ENCODE measurements at regions of chr18 and their contacts with region 1.

Region 1: GRCh38 chr18:59249205-59249774 is 24.0 kb downstream of the RAX start:
- DNase-seq: peak in 4 of 5 donors; percentile 69 to 93 (median 84)
- H3K4me3 ChIP-seq: no peak overlapping the region
- H3K27ac ChIP-seq: no peak overlapping the region
- H3K4me1 ChIP-seq: no peaks in the 10 kb centered on the region
- H3K27me3 ChIP-seq: peaks cover 9% of the 10 kb centered on the region
- CTCF ChIP-seq: peak; percentile 59

Region 2: DNA sequence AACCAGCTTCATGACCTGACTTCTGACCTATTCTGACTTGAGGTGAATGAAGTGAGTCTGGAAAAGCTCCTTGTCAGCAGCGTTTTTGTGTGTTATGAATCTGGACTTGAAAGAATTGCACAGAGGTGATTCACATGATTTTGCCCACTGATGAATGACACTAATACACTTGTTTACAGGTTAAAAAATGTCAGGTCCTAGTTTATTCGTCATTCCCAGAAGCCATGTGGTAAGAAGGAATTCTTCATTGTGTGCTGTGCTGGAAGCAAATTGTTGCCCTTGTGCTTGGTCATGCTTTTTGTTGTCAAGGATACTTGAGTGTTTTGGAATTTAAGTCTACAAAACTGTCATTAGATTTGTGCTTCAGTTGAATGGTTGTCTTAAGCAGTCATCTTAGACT is 94.1 kb before region 1 on chr18:
- intact Hi-C with region 1: no loop called
- DNase-seq: no peak
- H3K4me3 ChIP-seq: no peak overlapping the region
- H3K27ac ChIP-seq: no peak overlapping the region
- H3K4me1 ChIP-seq: no peaks in the 10 kb centered on the region
- H3K27me3 ChIP-seq: no peaks in the 10 kb centered on the region
- CTCF ChIP-seq: no peak

Region 3: DNA sequence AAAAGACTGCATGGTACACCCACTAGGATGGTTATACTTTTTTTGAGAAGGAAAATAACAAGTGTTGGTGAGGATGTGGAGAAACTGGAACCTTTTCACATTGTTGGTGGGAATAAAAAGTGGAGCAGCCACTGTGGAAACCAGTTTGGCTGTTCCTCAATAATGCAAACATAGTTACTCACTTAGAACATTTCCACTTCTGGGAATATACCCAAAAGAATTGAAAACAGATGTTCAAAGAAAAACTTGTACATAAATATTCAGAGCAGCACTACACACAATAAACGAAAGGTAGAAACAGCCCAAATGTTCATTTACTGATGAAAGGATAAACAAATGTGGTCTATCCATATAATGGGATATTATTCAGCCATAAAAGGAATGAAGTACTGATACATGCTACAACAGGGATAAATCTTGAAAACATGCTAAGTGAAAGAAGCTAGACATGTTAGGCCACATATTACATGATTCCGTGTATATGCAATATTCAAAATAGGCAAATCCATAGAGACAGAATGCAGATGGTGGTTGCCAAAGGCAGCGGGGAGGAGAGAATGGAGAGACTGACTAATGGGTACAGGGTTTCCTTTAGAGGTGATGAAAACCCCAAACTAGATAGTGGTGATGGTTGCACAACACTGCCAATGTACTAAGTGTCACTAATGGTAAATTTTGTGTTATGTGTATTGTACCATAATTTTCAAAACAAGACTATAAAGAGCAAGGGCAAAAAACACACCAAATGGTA is 130.7 kb after region 1 on chr18:
- intact Hi-C with region 1: no loop called
- DNase-seq: no peak
- H3K4me3 ChIP-seq: no peak overlapping the region
- H3K27ac ChIP-seq: no peak overlapping the region
- H3K4me1 ChIP-seq: no peaks in the 10 kb centered on the region
- H3K27me3 ChIP-seq: no peaks in the 10 kb centered on the region
- CTCF ChIP-seq: no peak

Region 4: DNA sequence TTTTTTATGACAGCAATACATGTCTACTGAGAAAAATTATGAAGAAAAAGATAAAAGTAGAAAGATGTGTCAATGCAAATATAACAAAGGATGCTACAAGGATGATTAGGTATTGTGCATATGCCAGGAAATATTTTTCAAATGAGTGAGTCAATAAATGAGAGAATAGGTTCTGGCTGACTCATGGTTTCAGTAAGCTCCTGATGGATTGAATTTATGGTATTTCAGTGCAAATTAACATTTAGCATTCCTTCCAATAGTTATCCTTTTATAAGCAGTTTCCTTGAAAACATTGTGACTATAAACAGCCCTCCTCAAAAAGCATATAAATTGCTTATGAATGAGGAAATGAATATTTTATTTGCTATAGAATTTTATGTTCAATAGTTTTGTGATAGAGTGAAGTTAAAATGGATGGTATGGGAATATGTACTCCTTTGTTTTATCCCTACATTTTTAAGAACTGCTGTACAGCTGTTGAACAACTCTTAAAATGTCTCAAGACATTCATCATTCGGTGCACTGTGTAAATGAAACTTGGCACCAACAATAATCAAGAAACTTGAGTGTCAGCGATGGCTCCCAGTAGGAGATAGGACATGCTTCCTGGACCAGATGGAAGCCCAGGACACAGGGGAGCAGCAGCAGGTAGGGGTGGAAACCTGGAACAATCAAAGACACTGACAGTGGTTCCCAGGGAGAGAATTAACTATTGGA is 795.2 kb after region 1 on chr18:
- intact Hi-C with region 1: loop called (anchors 10 kb)
- DNase-seq: no peak
- H3K4me3 ChIP-seq: no peak overlapping the region
- H3K27ac ChIP-seq: no peak overlapping the region
- H3K4me1 ChIP-seq: no peaks in the 10 kb centered on the region
- H3K27me3 ChIP-seq: no peaks in the 10 kb centered on the region
- CTCF ChIP-seq: no peak

Measured in kidney (tissue), 22 donors.